ENCODE measurements at regions of chr11 and their contacts with region 1.

Region 1: DNA sequence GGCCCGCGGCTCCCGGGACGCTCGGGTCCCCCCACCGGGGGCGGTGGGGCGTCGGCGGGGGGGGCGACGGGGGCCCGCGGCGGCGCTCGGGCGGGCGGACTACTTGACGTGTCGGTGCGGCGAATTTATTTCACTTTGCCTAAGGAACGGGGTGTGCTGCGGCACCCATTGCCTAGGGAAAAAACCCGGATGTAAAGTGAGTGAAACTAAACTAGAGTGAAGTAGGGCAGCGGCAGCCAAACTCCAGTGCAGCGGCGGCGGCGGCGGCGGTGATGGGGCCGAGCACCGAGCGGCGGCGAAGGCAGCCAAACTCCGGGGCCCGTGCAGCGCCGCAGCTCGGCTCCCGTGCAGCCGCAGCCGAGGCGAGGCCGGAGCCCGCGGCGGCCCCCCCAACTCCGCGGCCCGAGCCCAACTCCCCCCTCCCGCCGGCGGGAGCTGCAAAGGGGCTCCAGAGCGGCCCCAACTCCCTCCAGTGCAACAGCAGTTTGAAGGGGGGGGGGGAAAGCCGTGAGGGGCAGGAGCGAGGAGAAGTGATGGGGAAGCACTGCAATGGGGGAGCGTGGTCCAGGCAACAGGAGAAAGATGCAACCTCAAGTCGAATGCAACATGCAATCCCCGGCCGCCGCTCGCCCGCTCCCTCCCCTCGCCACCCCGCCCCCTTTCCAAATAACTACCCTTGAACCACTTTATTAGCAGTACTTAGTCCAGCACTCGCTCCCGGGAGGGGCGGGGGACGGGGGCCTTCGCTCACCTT is 647 bp upstream of the PHF21A start:
- DNase-seq: no peak
- ATAC-seq: peak; percentile 47
- H3K4me3 ChIP-seq: peak overlapping the region; percentile 95
- H3K27ac ChIP-seq: peak overlapping the region; percentile 34; the same call in 1 of the 2 replicates
- H3K4me1 ChIP-seq: peaks cover 3% of the 10 kb centered on the region; the same call in 1 of the 2 replicates
- H3K27me3 ChIP-seq: no peaks in the 10 kb centered on the region
- CTCF ChIP-seq: no peak
- EP300 ChIP-seq: no peak
- POLR2A ChIP-seq: peak; percentile 11
- RAD21 ChIP-seq: no peak

Region 2: GRCh38 chr11:45846974-45847910 is 274.7 kb before region 1 on chr11 and contains the start of gene CRY2:
- CTCF ChIA-PET with region 1: interaction called, 4 read pairs
- POLR2A ChIA-PET with region 1: no interaction called
- RAD21 ChIA-PET with region 1: no interaction called
- SMC1A ChIA-PET with region 1: interaction called, 3 read pairs
- in situ Hi-C with region 1: no loop called
- intact Hi-C with region 1: loop called (anchors 10 kb)
- DNase-seq: peak; percentile 90
- ATAC-seq: peak; percentile 93
- H3K4me3 ChIP-seq: peak within 1 kb of the TSS; percentile 78
- H3K27ac ChIP-seq: peak within 1 kb of the TSS; percentile 48
- H3K4me1 ChIP-seq: peaks cover 5% of the 10 kb centered on the region
- H3K27me3 ChIP-seq: no peaks in the 10 kb centered on the region
- CTCF ChIP-seq: no peak
- EP300 ChIP-seq: peak in 1 of 2 experiments; percentile 58; a peak in 2 of 4 replicates
- POLR2A ChIP-seq: peak; percentile 99
- RAD21 ChIP-seq: no peak
- polyA plus RNA-seq, gene CRY2: 1.2 to 1.4 TPM

Region 3: DNA sequence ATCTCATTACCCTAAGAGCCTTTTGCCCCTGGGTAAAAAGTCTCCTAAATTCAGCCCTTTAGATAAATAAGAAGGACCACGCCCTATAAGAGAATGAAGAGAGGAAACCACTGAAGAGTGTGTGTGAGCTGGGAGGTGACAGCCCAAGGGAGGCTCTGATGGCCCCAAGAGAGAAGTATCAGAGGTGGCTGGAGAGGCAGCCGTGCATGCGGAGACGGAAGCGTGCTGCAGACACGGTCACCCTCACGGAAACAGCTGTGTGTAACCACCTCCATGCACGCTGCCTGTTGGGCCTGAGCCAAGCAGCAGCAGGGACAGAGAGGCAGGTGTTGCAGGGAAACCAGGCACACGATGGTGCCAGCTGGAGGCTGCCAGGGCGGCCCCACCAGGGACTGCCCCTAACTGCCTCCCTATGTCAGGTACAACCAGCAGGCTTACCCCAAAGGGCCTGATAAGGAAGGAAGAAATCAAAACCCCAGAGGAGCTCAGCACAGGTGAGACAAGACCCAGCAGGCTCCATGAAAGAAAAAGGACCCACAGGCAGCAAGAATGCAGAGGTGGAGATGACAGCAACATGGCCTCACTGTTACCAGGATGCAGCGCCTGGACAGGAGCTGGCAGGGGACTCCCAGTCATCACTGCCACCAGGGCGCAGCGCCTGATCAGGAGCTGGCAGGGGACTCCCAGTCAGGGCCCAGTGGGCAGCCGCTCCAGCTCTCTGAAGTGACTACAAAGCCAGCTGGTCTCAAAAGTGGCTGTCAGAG is 191.7 kb before region 1 on chr11:
- CTCF ChIA-PET with region 1: no interaction called
- POLR2A ChIA-PET with region 1: interaction called, 6 read pairs
- RAD21 ChIA-PET with region 1: interaction called, 4 read pairs
- SMC1A ChIA-PET with region 1: interaction called, 10 read pairs
- in situ Hi-C with region 1: no loop called
- intact Hi-C with region 1: loop called (anchors 1 kb)
- DNase-seq: peak; percentile 88
- ATAC-seq: peak; percentile 89
- H3K4me3 ChIP-seq: no peak overlapping the region
- H3K27ac ChIP-seq: peak overlapping the region; percentile 35
- H3K4me1 ChIP-seq: peaks cover 49% of the 10 kb centered on the region
- H3K27me3 ChIP-seq: no peaks in the 10 kb centered on the region; a peak in 1 of 4 replicates
- CTCF ChIP-seq: no peak; a peak in 1 of 6 replicates
- EP300 ChIP-seq: peak; percentile 63 to 81
- POLR2A ChIP-seq: peak; percentile 29; the same call in 1 of the 2 replicates
- RAD21 ChIP-seq: no peak

Region 4: GRCh38 chr11:46026606-46027293 is 95.2 kb before region 1 on chr11:
- CTCF ChIA-PET with region 1: no interaction called
- POLR2A ChIA-PET with region 1: no interaction called
- RAD21 ChIA-PET with region 1: no interaction called
- SMC1A ChIA-PET with region 1: interaction called, 10 read pairs
- in situ Hi-C with region 1: no loop called
- intact Hi-C with region 1: no loop called
- DNase-seq: no peak
- ATAC-seq: no peak
- H3K4me3 ChIP-seq: no peak overlapping the region
- H3K27ac ChIP-seq: no peak overlapping the region
- H3K4me1 ChIP-seq: no peaks in the 10 kb centered on the region
- H3K27me3 ChIP-seq: no peaks in the 10 kb centered on the region
- CTCF ChIP-seq: no peak
- EP300 ChIP-seq: no peak
- POLR2A ChIP-seq: no peak
- RAD21 ChIP-seq: no peak

Region 5: DNA sequence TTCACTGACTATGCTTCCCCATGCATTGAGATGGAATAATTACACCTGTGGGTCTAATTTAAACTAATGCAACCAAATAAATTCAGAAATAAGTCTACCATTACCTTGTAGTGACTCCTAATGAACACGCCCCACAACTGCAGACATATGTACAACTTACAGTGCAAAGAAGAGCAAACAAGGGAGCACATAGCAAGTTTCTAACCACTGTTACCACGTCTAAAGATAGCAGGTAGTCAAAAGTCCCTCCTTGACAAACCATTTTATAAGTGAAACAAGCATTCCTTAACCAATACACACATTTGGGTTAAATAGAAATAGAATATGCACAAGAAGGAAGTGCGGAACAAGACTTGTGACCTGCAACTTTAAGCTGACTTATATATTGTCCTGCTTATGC is 21.2 kb before region 1 on chr11:
- CTCF ChIA-PET with region 1: interaction called, 133 read pairs
- POLR2A ChIA-PET with region 1: interaction called, 96 read pairs
- RAD21 ChIA-PET with region 1: interaction called, 64 read pairs
- SMC1A ChIA-PET with region 1: interaction called, 137 read pairs
- in situ Hi-C with region 1: no loop called
- intact Hi-C with region 1: loop called (anchors 1 kb)
- DNase-seq: peak; percentile 71
- ATAC-seq: peak; percentile 91
- H3K4me3 ChIP-seq: peak overlapping the region; percentile 44
- H3K27ac ChIP-seq: peak overlapping the region; percentile 74
- H3K4me1 ChIP-seq: peaks cover 6% of the 10 kb centered on the region; the same call in 1 of the 2 replicates
- H3K27me3 ChIP-seq: no peaks in the 10 kb centered on the region
- CTCF ChIP-seq: no peak
- EP300 ChIP-seq: peak in 1 of 2 experiments; percentile 23; a peak in 1 of 4 replicates
- POLR2A ChIP-seq: no peak
- RAD21 ChIP-seq: 0 out of 2 replicates have a peak, but pooled peaks have one; percentile 2

Region 6: GRCh38 chr11:46134540-46134939 is 12.6 kb after region 1 on chr11:
- CTCF ChIA-PET with region 1: interaction called, 3 read pairs
- POLR2A ChIA-PET with region 1: interaction called, 3 read pairs
- RAD21 ChIA-PET with region 1: no interaction called
- SMC1A ChIA-PET with region 1: interaction called, 10 read pairs
- in situ Hi-C with region 1: no loop called
- intact Hi-C with region 1: no loop called
- DNase-seq: no peak
- ATAC-seq: no peak
- H3K4me3 ChIP-seq: no peak overlapping the region
- H3K27ac ChIP-seq: no peak overlapping the region
- H3K4me1 ChIP-seq: peaks cover 3% of the 10 kb centered on the region; the same call in 1 of the 2 replicates
- H3K27me3 ChIP-seq: no peaks in the 10 kb centered on the region; a peak in 2 of 4 replicates
- CTCF ChIP-seq: no peak
- EP300 ChIP-seq: no peak
- POLR2A ChIP-seq: no peak
- RAD21 ChIP-seq: no peak

Region 7: DNA sequence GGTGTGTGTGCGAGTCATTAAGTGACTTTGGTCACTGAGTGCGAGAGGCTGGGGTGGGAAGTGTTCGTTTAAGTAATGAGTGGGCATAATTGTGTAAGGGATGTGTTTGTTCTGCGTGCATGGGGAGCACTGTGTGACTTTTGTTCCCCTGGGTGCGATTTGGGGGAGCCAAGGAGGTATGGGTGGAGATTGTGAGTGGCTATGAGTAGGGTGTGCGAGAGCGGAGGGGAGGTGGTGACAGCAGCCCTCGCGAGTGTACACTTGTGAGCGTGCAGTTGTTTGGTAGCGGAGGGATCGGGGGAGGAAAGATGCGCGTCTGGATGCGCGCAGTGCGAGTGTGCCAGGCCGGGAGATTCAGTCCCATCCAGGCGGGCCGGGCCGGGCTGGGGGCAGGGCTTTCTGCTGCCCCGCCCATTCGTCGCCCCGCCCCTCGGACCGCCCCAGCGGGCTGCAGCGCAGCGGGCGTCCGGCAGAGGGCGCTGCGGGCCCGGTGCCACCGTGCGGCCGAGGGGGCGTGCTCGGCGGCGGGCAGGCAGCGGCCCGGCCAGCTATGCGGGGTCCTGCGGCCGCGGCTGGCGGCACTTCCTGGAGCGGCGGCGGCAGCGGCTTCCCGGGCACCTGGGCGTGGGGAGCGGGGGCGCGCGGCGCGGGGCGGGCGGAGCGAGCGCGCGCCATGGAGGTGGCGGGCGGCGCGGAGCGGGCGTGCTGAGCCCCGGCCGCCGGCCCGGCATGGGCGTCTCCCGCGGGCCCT is 225.2 kb after region 1 on chr11 and contains the start of gene DGKZ:
- CTCF ChIA-PET with region 1: no interaction called
- POLR2A ChIA-PET with region 1: interaction called, 3 read pairs
- RAD21 ChIA-PET with region 1: no interaction called
- SMC1A ChIA-PET with region 1: no interaction called
- in situ Hi-C with region 1: no loop called
- intact Hi-C with region 1: loop called (anchors 10 kb)
- DNase-seq: no peak
- ATAC-seq: peak; percentile 69
- H3K4me3 ChIP-seq: peak within 1 kb of the TSS; percentile 88
- H3K27ac ChIP-seq: peak within 1 kb of the TSS; percentile 71
- H3K4me1 ChIP-seq: peaks cover 39% of the 10 kb centered on the region
- H3K27me3 ChIP-seq: no peaks in the 10 kb centered on the region
- CTCF ChIP-seq: peak; percentile 63 to 92 (median 64); a peak in 4 of 6 replicates
- EP300 ChIP-seq: no peak
- POLR2A ChIP-seq: no peak; the same call in 1 of the 2 replicates
- RAD21 ChIP-seq: peak; percentile 64
- polyA plus RNA-seq, gene DGKZ: 0.50 to 1.6 TPM